Posterior vena cava (tissue), 2 donors: ENCODE measurements at regions of chr7 and their contacts with region 1.

Region 1: GRCh38 chr7:27150568-27151340 is 1.6 kb downstream of the HOXA3 start:
- DNase-seq: peak; percentile 93

Region 2: GRCh38 chr7:26200444-26201246 is 950.1 kb before region 1 on chr7 and contains the start of gene HNRNPA2B1:
- intact Hi-C with region 1: loop called in 1 of 2 experiments (anchors 10 kb)
- DNase-seq: peak; percentile 99
- total RNA-seq, gene HNRNPA2B1: 269 to 275 TPM

Region 3: GRCh38 chr7:27300421-27300820 is 149.7 kb after region 1 on chr7:
- intact Hi-C with region 1: no loop called
- DNase-seq: no peak